WTC11 (cell line): ENCODE measurements at regions of chr20 and their contacts with region 1.

Region 1: GRCh38 chr20:61234008-61234802 is 17.9 kb upstream of the CDH4 start:
- DNase-seq: no peak
- ATAC-seq: no peak
- H3K4me3 Mint-ChIP-seq: no peak overlapping the region
- H3K27ac Mint-ChIP-seq: no peak overlapping the region
- H3K4me1 Mint-ChIP-seq: peaks cover 15% of the 10 kb centered on the region
- H3K27me3 Mint-ChIP-seq: peaks cover 77% of the 10 kb centered on the region
- CTCF ChIP-seq: no peak

Region 2: GRCh38 chr20:60851826-60852704 is 382.1 kb before region 1 on chr20:
- CTCF ChIA-PET with region 1: interaction called, 12 read pairs
- POLR2A ChIA-PET with region 1: no interaction called
- DNase-seq: peak; percentile 68
- ATAC-seq: peak; percentile 90
- H3K4me3 Mint-ChIP-seq: no peak overlapping the region
- H3K27ac Mint-ChIP-seq: no peak overlapping the region
- H3K4me1 Mint-ChIP-seq: peaks cover 6% of the 10 kb centered on the region; the same call in 1 of the 2 replicates
- H3K27me3 Mint-ChIP-seq: peaks cover 23% of the 10 kb centered on the region
- CTCF ChIP-seq: peak; percentile 64

Region 3: DNA sequence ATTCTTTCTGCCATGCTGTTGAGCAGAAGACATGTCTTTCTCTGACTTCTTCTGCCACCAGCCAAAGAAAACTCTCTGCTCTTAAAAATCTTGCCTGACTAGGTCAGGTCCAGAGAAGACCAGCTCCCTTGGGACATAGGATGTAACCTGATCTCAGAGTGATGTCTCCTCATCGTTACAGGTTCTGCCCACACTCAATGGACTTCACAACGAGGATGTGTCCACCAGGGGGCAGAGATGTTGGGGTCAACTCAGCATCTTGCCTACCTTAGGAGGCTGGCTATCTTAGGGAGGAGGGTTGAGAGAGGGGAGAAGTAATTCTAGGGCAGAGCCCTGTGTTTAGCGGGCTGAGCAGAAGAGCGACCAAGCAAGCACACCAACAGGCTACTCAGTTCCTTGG is 189.7 kb before region 1 on chr20:
- CTCF ChIA-PET with region 1: no interaction called
- POLR2A ChIA-PET with region 1: no interaction called
- DNase-seq: peak; percentile 43
- ATAC-seq: peak; percentile 69
- H3K4me3 Mint-ChIP-seq: no peak overlapping the region
- H3K27ac Mint-ChIP-seq: no peak overlapping the region
- H3K4me1 Mint-ChIP-seq: no peaks in the 10 kb centered on the region
- H3K27me3 Mint-ChIP-seq: peaks cover 58% of the 10 kb centered on the region
- CTCF ChIP-seq: 0 out of 2 replicates have a peak, but pooled peaks have one; percentile 18

Region 4: GRCh38 chr20:61168605-61169004 is 65.6 kb before region 1 on chr20:
- CTCF ChIA-PET with region 1: interaction called, 12 read pairs
- POLR2A ChIA-PET with region 1: no interaction called
- DNase-seq: no peak
- ATAC-seq: no peak
- H3K4me3 Mint-ChIP-seq: no peak overlapping the region
- H3K27ac Mint-ChIP-seq: no peak overlapping the region
- H3K4me1 Mint-ChIP-seq: peaks cover 34% of the 10 kb centered on the region
- H3K27me3 Mint-ChIP-seq: peaks cover 60% of the 10 kb centered on the region
- CTCF ChIP-seq: no peak

Region 5: GRCh38 chr20:61219021-61219431 is 15.2 kb before region 1 on chr20:
- CTCF ChIA-PET with region 1: interaction called, 16 read pairs
- POLR2A ChIA-PET with region 1: no interaction called
- DNase-seq: no peak
- ATAC-seq: no peak
- H3K4me3 Mint-ChIP-seq: no peak overlapping the region
- H3K27ac Mint-ChIP-seq: no peak overlapping the region
- H3K4me1 Mint-ChIP-seq: no peaks in the 10 kb centered on the region
- H3K27me3 Mint-ChIP-seq: peaks cover 97% of the 10 kb centered on the region
- CTCF ChIP-seq: no peak

Region 6: DNA sequence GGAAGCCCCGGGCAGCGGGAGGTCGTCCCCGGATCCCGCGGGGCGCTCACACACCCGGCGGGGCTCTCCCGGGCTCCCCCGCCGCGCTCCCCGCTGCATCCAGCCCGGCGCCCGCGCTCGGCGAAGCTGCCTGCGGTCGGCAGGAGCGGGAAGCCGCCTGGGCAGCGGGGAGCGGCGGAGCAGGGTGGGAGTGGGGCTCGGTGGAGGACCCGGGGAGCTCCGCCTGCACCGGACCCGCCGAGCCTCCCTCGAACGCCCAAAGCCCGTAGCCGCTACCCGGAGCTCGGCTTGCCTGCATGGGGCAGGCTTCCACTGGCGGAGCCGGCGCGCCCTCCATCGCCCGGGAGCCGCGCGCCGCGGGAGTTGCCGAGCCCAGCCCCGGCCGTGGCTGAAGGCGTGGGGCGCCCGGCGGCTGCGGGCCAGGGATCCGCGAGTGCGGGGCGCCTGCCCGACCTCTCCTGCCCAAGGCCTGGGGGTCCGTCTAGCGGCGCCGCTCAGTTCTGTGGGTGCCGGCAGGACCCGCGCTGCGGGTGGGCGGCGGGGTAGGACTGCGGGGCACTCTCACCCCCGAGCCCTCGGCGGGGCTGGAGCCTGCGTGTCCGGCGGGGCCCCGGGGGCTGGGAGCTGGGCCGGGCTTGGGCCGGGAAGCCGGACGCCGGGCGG is 18.5 kb after region 1 on chr20:
- CTCF ChIA-PET with region 1: interaction called, 17 read pairs
- POLR2A ChIA-PET with region 1: no interaction called
- DNase-seq: no peak
- ATAC-seq: no peak
- H3K4me3 Mint-ChIP-seq: no peak overlapping the region
- H3K27ac Mint-ChIP-seq: no peak overlapping the region
- H3K4me1 Mint-ChIP-seq: peaks cover 27% of the 10 kb centered on the region
- H3K27me3 Mint-ChIP-seq: peaks cover 76% of the 10 kb centered on the region
- CTCF ChIP-seq: no peak